ENCODE measurements at regions of chr9 and their contacts with region 1.

Region 1: DNA sequence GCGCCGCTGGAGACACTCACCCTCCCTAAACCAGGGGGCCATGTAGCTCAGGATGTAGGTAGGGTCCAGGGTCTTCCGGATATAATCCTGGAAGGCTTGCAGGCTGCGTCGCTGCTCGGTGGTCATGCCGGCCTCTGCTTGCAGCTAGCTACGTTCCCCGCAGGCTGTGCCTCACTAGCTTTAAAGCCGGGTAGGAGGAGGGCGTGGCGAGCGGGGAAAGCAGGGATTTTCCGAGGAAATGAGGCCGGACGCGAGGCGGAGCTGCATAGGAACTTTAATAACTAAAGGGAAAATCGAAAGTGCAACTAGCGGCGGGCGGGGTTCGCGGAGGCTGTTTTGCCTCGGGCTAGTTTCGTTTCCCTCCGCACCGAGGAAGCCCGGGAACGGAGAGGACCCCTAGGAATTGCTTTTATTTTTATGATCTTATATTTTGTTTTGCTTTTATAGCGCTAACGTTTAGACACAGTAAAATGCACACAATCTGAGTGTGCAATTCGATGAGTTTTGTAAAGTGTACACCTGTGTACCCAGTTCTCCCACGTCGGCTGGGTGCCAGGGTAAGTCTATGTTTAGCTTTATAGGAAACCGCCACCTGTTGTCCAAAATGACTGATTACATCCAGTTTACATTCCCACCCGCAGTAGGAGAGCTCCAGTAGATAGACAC is at the start of gene RIGI:
- DNase-seq: peak; percentile 64 to 85
- ATAC-seq: peak; percentile 92 to 93
- H3K4me3 ChIP-seq: peak within 1 kb of the TSS; percentile 58
- H3K27ac ChIP-seq: peak within 1 kb of the TSS; percentile 46 to 83
- H3K4me1 ChIP-seq: peaks cover 6% of the 10 kb centered on the region; the same call in 2 of the 3 replicates
- CTCF ChIP-seq: peak; percentile 71
- EP300 ChIP-seq: no peak
- POLR2A ChIP-seq: 0 out of 2 replicates have a peak, but pooled peaks have one; percentile 19
- RAD21 ChIP-seq: peak; percentile 58 to 74
- polyA plus RNA-seq, gene RIGI: 3.9 and 4.8 TPM in 2 replicates

Region 2: GRCh38 chr9:32384364-32385151 is 141.6 kb before region 1 on chr9 and contains the start of gene ACO1:
- CTCF ChIA-PET with region 1: interaction called, 159 read pairs
- POLR2A ChIA-PET with region 1: interaction called, 25 read pairs
- DNase-seq: peak; percentile 73 to 84
- ATAC-seq: peak; percentile 90 to 97
- H3K4me3 ChIP-seq: peak within 1 kb of the TSS; percentile 81
- H3K27ac ChIP-seq: peak within 1 kb of the TSS; percentile 62 to 89
- H3K4me1 ChIP-seq: peaks cover 5% of the 10 kb centered on the region; the same call in 1 of the 3 replicates
- CTCF ChIP-seq: no peak
- EP300 ChIP-seq: no peak
- POLR2A ChIP-seq: peak; percentile 85
- RAD21 ChIP-seq: peak in 1 of 2 experiments; percentile 18; a peak in 1 of 5 replicates
- polyA plus RNA-seq, gene ACO1: 40.2 and 41.0 TPM in 2 replicates

Region 3: DNA sequence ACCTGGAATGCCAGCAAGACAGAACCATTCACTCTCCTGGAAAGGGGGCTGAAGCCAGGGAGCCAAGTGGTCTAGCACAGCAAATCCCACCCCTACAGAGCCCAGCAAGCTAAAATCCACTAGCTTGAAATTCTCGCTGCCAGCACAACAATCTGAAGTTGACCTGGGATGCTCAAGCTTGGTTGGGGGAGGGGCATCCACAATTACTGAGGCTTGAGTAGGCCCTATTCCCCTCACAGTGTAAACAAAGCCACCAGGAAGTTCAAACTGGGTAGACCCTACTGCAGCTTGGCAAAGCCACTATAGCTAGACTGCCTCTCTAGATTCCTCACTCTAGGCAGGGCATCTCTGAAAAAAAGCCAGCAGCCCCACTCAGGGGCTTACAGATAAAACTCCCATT is 17.4 kb before region 1 on chr9:
- CTCF ChIA-PET with region 1: interaction called, 15 read pairs
- POLR2A ChIA-PET with region 1: no interaction called
- DNase-seq: no peak
- ATAC-seq: no peak
- H3K4me3 ChIP-seq: no peak overlapping the region
- H3K27ac ChIP-seq: no peak overlapping the region
- H3K4me1 ChIP-seq: no peaks in the 10 kb centered on the region
- CTCF ChIP-seq: no peak
- EP300 ChIP-seq: no peak
- POLR2A ChIP-seq: no peak
- RAD21 ChIP-seq: no peak

Region 4: DNA sequence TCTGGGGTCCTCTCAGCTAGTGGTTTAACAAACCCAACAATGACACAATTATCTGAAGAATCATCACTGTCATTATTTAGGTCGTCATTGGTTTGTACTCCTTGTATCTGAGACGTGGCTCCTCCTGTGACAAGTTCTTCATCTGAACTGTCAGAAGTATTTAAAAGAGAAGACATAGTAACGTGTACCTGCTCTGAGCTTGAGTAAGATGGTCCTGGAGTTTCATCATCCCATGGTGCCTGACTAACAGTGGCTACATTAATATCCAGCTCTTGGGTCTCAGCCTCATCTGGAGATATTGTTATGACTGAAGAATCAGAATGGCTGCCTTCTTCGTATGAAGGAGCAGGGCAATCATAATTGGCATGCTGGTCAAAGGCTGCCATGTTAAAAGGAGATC is 16.9 kb after region 1 on chr9:
- CTCF ChIA-PET with region 1: interaction called, 19 read pairs
- POLR2A ChIA-PET with region 1: no interaction called
- DNase-seq: no peak
- ATAC-seq: no peak
- H3K4me3 ChIP-seq: no peak overlapping the region
- H3K27ac ChIP-seq: no peak overlapping the region
- H3K4me1 ChIP-seq: no peaks in the 10 kb centered on the region
- CTCF ChIP-seq: no peak
- EP300 ChIP-seq: no peak
- POLR2A ChIP-seq: no peak
- RAD21 ChIP-seq: no peak

Region 5: DNA sequence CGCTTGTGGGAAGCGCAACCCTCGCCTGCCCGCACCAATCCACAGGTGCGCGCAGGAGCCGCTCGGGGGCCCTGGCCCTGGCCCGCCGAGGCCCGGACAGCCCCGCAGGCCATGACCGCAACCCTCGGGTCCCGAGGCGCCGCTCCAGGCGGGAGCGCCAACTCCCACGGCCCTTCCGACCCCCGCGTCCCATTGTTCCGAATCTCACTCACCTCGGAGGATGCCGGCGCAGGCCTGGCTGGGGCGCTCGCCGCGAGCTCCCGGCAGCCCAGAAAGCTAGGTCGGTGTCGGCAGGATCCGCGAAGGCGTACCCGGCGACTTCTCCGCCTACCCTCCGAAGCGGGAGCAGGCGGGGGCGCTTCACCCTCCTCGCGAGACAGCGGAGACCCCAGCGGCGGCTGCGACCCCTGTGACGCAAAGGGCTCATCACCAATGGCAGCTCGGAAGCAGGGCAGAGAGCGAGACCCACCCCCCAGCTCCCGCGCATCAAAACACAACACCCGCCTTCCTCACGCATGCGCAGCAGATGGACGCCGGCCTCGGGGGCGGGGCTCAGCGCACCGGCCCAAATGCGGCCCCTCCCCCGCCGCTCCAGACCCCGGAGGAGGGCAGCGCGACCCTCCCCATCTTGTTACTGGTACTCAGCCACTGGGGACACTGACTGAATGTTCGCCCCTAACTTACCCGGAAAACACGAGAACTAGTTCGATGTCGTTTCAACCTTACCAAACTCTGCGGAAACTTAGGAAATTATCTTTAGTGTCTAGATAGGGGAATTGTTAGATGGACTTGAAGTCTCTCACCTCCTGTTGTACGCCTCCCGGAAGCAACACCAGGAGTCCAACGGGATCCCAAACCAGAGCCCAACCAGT is 24.6 kb after region 1 on chr9:
- CTCF ChIA-PET with region 1: interaction called, 19 read pairs
- POLR2A ChIA-PET with region 1: interaction called, 14 read pairs
- DNase-seq: peak; percentile 93 to 97
- ATAC-seq: peak; percentile 70 to 85
- H3K4me3 ChIP-seq: peak overlapping the region; percentile 62
- H3K27ac ChIP-seq: peak overlapping the region; percentile 94 to 96
- H3K4me1 ChIP-seq: peaks cover 17% of the 10 kb centered on the region
- CTCF ChIP-seq: no peak
- EP300 ChIP-seq: no peak
- POLR2A ChIP-seq: no peak; the same call in 1 of the 2 replicates
- RAD21 ChIP-seq: no peak

Measured in A549 (cell line).